Dorsolateral prefrontal cortex (tissue), 120 donors: ENCODE measurements at regions of chr7 and their contacts with region 1.

Region 1: GRCh38 chr7:131688738-131689661 is 132.6 kb upstream of the PODXL start:
- DNase-seq: peak in 9 of 10 donors; percentile 54 to 78 (median 68)
- H3K4me3 ChIP-seq: no peak overlapping the region
- H3K27ac ChIP-seq: no peak overlapping the region
- H3K27me3 ChIP-seq: peaks cover 0 to 20% (median 0%) of the 10 kb centered on the region in 45 donors
- CTCF ChIP-seq: peak; percentile 80 to 98 (median 95)

Region 2: DNA sequence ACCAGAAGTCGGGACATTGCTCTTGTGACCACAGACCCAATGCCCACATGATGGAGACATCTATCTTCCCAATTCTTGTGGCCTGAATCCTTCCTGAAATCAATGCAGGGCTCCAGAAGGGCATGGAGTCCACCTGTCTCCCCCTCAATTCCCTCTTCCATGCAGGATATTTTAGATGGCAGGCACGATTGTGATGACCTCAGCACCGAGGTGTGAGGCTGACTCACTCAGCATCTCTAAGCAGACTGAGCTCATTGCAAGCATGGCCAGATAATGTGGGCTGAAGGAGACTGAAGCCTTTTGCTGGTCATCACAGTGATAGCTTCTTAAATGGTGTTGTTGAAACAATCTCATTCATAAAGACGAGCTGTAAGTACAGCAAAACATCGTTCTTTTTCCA is 242.4 kb after region 1 on chr7:
- intact Hi-C with region 1: loop called in 1 of 2 experiments (anchors 10 kb)
- DNase-seq: peak in 1 of 10 donors; percentile 67
- H3K4me3 ChIP-seq: no peak overlapping the region
- H3K27ac ChIP-seq: no peak overlapping the region
- H3K27me3 ChIP-seq: peaks cover 0 to 5% (median 0%) of the 10 kb centered on the region in 45 donors
- CTCF ChIP-seq: no peak